Ascending aorta (tissue), 2 donors: ENCODE measurements at regions of chr1 and their contacts with region 1.

Region 1: DNA sequence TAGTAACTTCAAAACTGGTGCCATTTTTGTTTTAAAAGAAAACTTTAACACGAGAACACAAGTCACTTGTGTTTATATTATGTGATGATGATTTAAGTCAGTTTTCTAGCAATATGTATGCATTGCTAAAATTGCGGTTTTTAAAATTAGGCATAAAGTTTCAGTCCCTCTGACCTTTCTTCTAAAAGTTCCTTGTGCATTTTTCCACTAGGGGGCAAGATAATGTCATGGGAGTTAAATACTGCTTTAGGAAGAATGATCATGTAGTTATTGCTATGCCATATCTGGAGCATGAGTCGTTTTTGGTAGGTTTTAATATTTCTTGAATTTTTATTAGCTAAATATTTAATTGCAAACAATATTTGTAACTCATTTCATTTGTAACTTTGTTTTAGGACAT is 10.7 kb downstream of the CDC7 start:
- DNase-seq: no peak
- H3K4me3 ChIP-seq: no peak overlapping the region
- H3K27ac ChIP-seq: no peak overlapping the region
- H3K4me1 ChIP-seq: no peaks in the 10 kb centered on the region
- H3K27me3 ChIP-seq: no peaks in the 10 kb centered on the region
- CTCF ChIP-seq: peak; percentile 41 to 57 (median 55)

Region 2: DNA sequence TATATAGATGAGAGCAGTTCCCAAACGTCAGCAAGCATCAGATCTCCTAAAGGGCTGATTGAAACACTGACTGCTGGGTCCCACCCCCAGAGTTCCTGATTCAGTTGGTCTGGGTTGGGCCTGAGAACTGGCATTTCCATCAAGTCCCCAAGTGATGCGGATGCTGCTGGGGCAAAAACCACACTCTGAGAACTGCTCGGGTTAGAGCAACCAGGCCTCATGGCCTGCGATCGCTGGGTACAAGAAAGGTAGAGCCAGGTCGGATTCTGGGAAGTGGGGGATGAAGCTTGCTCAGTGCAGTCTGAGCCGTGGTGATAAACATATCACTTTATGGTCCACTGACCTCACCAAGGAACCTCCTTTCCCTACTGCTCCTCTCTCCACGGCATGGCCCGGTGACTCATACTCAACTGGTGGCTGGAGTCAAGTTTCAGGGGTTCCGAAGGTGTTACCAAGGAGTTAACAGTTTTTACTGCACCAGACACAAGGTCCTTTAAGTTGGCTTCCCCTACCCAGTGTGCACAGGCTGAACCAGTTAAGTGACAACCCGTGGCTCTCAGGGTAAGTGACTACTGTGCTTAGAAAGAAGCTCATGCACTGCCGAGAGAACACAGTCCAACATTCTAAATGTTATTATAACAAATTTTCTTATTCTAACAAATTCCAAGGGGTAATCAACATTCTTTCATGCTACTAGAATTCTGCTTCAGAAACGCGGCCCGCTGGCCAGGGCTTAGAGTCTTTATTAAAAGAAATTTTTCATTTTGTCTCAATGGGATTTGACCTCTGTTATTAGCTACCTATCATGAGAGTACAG is 221.1 kb after region 1 on chr1:
- intact Hi-C with region 1: loop called (anchors 10 kb)
- DNase-seq: no peak
- H3K4me3 ChIP-seq: no peak overlapping the region
- H3K27ac ChIP-seq: peak overlapping the region in 1 of 2 donors; percentile 17
- H3K4me1 ChIP-seq: peaks cover 0 to 28% of the 10 kb centered on the region in 2 donors
- H3K27me3 ChIP-seq: no peaks in the 10 kb centered on the region
- CTCF ChIP-seq: no peak

Region 3: GRCh38 chr1:91924146-91924545 is 412.8 kb after region 1 on chr1:
- intact Hi-C with region 1: loop called (anchors 1 kb)
- DNase-seq: no peak
- H3K4me3 ChIP-seq: no peak overlapping the region
- H3K27ac ChIP-seq: no peak overlapping the region
- H3K4me1 ChIP-seq: no peaks in the 10 kb centered on the region
- H3K27me3 ChIP-seq: no peaks in the 10 kb centered on the region
- CTCF ChIP-seq: no peak